ENCODE measurements at regions of chr9 and their contacts with region 1.

Region 1: DNA sequence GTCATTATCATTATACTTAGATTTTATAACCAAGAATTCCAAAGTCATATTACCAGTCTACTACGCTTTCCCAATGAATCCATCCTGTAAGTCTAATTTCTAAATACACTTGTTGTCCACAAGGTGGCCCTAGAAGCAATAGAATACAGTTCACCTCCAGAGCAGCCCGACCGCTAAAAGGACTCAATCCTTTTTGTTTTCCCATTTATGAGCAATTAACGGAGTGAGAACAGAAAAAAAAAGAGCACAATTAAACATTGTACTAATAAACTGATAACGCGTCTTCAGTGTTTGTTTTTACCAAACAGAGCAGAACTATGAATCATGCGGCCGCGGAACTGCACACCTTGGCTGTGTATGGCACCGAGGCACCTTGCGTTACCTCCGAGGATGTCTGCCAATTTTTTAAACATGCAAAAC is 160.7 kb upstream of the DAPK1 start:
- DNase-seq: peak; percentile 13
- ATAC-seq: peak; percentile 86
- H3K4me3 ChIP-seq: peak overlapping the region; percentile 8; the same call in 1 of the 2 replicates
- H3K27ac ChIP-seq: no peak overlapping the region
- H3K4me1 ChIP-seq: peaks cover 4% of the 10 kb centered on the region; the same call in 1 of the 2 replicates
- H3K27me3 ChIP-seq: no peaks in the 10 kb centered on the region
- CTCF ChIP-seq: peak; percentile 47 to 65 (median 52)
- EP300 ChIP-seq: no peak
- POLR2A ChIP-seq: no peak
- RAD21 ChIP-seq: peak; percentile 92

Region 2: GRCh38 chr9:87662808-87663528 is 326.0 kb after region 1 on chr9:
- CTCF ChIA-PET with region 1: interaction called, 59 read pairs
- POLR2A ChIA-PET with region 1: no interaction called
- RAD21 ChIA-PET with region 1: interaction called, 14 read pairs
- SMC1A ChIA-PET with region 1: interaction called, 26 read pairs
- in situ Hi-C with region 1: loop called (anchors 5 kb)
- intact Hi-C with region 1: loop called (anchors 1 kb)
- DNase-seq: no peak
- ATAC-seq: peak; percentile 88
- H3K4me3 ChIP-seq: no peak overlapping the region
- H3K27ac ChIP-seq: no peak overlapping the region
- H3K4me1 ChIP-seq: no peaks in the 10 kb centered on the region
- H3K27me3 ChIP-seq: no peaks in the 10 kb centered on the region
- CTCF ChIP-seq: peak; percentile 78 to 85 (median 81)
- EP300 ChIP-seq: no peak
- POLR2A ChIP-seq: no peak
- RAD21 ChIP-seq: peak; percentile 87

Region 3: DNA sequence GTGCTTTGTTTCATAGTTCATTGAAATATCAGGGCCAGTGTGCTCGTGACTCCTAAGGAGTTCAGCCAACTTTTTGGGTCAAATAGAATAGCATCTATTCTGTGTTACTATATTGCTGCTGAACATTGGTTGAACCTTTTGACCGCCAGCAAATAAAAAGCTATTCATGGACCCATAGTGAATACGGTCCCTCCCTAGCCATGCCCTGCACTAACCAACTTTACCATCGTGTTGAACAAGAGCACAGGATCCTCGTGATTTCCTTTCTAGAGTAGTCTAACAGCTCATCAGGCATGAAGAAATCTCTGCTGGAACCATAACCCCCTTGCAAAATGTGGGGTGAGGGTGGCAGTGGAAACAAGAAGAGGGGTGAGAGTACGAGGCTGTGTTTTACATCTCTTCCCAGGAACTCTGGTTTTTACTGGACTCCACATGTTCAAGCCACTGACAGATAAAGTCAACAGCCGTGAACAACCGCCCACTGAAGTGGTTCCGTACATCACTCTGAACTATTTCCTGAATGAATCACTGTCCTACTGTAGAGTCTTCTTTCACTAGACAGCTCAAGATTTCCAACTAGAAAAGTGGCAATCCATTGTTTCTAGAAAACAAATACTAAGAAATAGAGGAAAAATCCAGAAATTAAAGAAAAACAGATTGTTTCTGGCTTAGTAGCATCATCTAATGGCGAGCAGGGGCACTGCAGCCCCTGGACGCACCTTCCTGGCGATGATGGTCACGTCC is 475.6 kb after region 1 on chr9:
- CTCF ChIA-PET with region 1: interaction called, 7 read pairs
- POLR2A ChIA-PET with region 1: no interaction called
- RAD21 ChIA-PET with region 1: no interaction called
- SMC1A ChIA-PET with region 1: interaction called, 3 read pairs
- in situ Hi-C with region 1: no loop called
- intact Hi-C with region 1: loop called (anchors 2 kb)
- DNase-seq: no peak
- ATAC-seq: no peak
- H3K4me3 ChIP-seq: no peak overlapping the region
- H3K27ac ChIP-seq: no peak overlapping the region
- H3K4me1 ChIP-seq: no peaks in the 10 kb centered on the region
- H3K27me3 ChIP-seq: no peaks in the 10 kb centered on the region; a peak in 1 of 4 replicates
- CTCF ChIP-seq: peak; percentile 67 to 82 (median 80)
- EP300 ChIP-seq: no peak
- POLR2A ChIP-seq: no peak
- RAD21 ChIP-seq: peak; percentile 59